ENCODE measurements at regions of chr14 and their contacts with region 1.

Region 1: DNA sequence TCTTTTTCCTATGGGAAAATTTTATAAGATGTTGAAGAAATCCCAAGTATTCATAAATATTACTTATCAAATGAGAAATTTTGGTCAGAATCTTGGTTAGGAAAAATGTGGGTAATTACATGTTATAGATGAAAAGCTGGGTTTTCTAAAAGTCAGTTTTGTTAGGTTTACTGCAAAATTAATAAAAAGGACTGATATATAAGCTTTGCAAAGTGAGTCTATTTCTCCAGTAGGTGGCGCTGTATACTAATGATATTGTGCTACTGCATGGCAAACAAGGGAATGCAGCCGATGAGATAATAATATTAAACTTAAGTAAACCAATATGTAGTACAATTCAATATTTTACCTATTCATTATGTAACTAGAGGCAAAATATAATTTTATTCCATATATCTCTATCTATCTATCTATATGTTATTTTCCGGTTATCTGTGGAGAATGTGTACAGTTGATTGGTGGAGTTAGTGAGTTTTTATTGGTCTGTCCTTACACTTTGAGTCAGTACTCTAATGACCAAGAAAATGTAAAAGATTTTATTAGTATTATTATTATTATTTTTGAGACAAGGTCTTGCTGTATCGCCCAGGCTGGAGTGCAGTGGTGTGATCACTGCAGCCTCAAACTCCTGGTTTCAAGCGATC is 32.9 kb downstream of the MIPOL1 start:
- DNase-seq: peak; percentile 10
- H3K4me3 ChIP-seq: no peak overlapping the region
- H3K27me3 ChIP-seq: no peaks in the 10 kb centered on the region
- CTCF ChIP-seq: peak; percentile 71

Region 2: DNA sequence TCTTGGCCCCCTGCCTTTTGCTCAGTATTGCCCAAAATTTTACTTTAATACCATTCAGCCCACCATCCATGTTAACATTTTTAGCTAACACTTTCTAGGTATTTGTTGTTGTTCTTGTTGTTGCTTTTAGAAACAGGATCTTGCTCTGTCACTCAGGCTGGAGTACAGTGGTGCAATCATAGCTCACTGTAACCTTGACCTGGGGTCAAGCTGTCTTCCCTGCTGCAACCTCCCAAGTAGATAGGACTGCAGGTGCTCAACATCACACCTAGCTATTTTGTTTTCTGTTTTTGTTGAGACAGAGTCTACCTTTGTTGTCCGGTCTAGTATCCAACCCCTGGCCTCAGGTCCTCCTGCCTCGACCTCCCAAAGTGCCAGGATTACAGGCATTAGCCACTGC is 28.9 kb before region 1 on chr14:
- CTCF ChIA-PET with region 1: interaction called, 10 read pairs
- POLR2A ChIA-PET with region 1: no interaction called
- DNase-seq: no peak
- H3K4me3 ChIP-seq: no peak overlapping the region
- H3K27me3 ChIP-seq: no peaks in the 10 kb centered on the region
- CTCF ChIP-seq: no peak

Region 3: GRCh38 chr14:37213016-37213415 is 17.7 kb before region 1 on chr14:
- CTCF ChIA-PET with region 1: interaction called, 50 read pairs
- POLR2A ChIA-PET with region 1: no interaction called
- DNase-seq: no peak
- H3K4me3 ChIP-seq: no peak overlapping the region
- H3K27me3 ChIP-seq: no peaks in the 10 kb centered on the region
- CTCF ChIP-seq: no peak

Region 4: DNA sequence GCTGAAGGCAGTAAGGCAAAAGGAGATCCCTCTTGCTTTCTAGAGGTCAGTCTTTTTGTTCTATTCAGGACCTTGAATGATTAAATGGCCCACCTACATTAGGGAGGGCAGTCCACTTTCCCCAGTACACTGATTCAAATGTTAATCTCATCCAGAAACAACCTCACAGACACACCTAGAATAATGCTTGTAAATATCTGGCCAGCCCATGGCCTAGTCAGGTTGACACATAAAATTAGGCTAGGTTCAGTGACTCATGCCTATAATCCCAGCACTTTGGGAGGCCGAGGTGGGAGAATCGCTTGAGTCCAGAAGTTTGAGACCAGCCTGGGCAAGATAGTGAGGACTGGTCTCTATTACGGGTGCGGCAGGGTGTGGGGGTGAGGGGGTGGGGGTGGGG is 10.5 kb after region 1 on chr14:
- CTCF ChIA-PET with region 1: interaction called, 18 read pairs
- POLR2A ChIA-PET with region 1: no interaction called
- DNase-seq: no peak
- H3K4me3 ChIP-seq: no peak overlapping the region
- H3K27me3 ChIP-seq: no peaks in the 10 kb centered on the region
- CTCF ChIP-seq: no peak

Region 5: DNA sequence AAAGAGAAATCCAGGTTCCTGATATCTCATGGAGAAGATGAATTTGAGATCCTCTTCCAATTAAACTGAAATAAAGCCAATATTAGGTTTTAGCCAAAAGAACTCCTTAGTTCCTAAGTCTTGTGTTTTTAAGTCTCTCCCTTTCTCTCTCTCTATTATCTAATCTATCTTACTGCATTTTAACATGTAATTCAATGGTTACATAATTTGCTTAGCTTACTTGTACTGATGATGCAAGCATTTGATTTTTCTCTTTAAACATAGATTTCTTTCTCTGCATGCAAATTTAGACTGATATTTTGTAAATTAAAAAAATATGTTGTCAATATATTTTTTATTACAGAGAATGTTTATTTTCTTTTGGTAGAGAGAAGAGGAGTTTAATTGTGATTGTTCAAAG is 45.3 kb after region 1 on chr14:
- CTCF ChIA-PET with region 1: no interaction called
- POLR2A ChIA-PET with region 1: no interaction called
- DNase-seq: no peak
- H3K4me3 ChIP-seq: no peak overlapping the region
- H3K27me3 ChIP-seq: no peaks in the 10 kb centered on the region
- CTCF ChIP-seq: no peak

Measured in BJ (cell line).